Esophagus muscularis mucosa (tissue), 4 donors: ENCODE measurements at regions of chr9 and their contacts with region 1.

Region 1: DNA sequence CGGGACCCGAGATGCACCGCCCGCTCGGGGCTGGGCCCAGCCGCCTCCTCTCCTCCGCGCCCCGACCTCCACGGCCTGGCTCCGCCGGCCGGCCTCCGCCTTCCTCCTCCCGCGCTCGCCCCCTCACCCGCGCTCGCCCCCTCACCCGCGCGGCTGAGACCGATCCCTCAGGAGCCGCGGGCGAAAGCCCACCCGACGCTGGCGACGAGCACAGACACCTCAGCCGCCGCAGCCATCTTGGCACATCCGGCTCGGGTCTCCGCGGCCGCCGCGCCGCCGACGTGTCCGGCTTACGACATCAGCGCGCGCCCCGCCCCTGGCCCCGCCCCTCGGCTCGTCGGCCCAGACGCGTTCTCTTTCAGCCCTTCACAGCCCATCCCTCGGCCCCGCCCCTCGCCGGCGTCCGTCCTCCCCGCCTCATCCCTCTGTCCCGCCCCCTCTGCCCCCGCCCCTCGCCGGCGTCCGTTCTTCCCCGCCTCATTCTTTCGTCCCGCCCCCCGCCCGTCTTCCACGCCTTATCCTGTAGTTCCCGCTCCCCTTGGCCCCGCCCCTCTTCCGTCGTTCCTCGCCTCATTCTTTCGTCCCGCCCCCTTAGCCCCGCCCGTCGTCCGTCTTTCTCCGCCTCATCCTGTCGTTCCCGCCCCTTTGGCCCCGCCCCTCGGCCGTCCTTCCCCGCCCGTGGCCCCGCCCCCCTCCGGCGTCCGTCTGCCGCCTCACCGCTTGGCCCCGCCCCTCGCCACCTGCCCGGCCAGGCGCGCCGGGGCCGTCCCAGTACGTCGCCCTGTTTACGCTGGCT is at the start of gene SEC16A:
- DNase-seq: peak; percentile 100
- H3K4me3 ChIP-seq: peak within 1 kb of the TSS; percentile 67 to 99 (median 95)
- H3K27ac ChIP-seq: peak within 1 kb of the TSS; percentile 91 to 100 (median 98)
- H3K4me1 ChIP-seq: peaks cover 21 to 46% (median 40%) of the 10 kb centered on the region in 4 donors
- H3K27me3 ChIP-seq: no peaks in the 10 kb centered on the region
- CTCF ChIP-seq: no peak
- EP300 ChIP-seq: no peak
- POLR2A ChIP-seq: peak; percentile 94
- total RNA-seq, gene SEC16A: 43.2 to 62.3 (median 51.3) TPM

Region 2: GRCh38 chr9:136424750-136425362 is 58.1 kb before region 1 on chr9:
- intact Hi-C with region 1: no loop called
- DNase-seq: no peak
- H3K4me3 ChIP-seq: no peak overlapping the region
- H3K27ac ChIP-seq: no peak overlapping the region
- H3K4me1 ChIP-seq: no peaks in the 10 kb centered on the region
- H3K27me3 ChIP-seq: no peaks in the 10 kb centered on the region
- CTCF ChIP-seq: no peak
- EP300 ChIP-seq: no peak
- POLR2A ChIP-seq: no peak

Region 3: GRCh38 chr9:136527721-136528691 is 45.0 kb after region 1 on chr9:
- intact Hi-C with region 1: loop called (anchors 5 kb)
- DNase-seq: no peak
- H3K4me3 ChIP-seq: no peak overlapping the region
- H3K27ac ChIP-seq: peak overlapping the region; percentile 72 to 79 (median 76)
- H3K4me1 ChIP-seq: peaks cover 81 to 100% (median 98%) of the 10 kb centered on the region in 4 donors
- H3K27me3 ChIP-seq: no peaks in the 10 kb centered on the region
- CTCF ChIP-seq: no peak
- EP300 ChIP-seq: no peak
- POLR2A ChIP-seq: no peak

Region 4: DNA sequence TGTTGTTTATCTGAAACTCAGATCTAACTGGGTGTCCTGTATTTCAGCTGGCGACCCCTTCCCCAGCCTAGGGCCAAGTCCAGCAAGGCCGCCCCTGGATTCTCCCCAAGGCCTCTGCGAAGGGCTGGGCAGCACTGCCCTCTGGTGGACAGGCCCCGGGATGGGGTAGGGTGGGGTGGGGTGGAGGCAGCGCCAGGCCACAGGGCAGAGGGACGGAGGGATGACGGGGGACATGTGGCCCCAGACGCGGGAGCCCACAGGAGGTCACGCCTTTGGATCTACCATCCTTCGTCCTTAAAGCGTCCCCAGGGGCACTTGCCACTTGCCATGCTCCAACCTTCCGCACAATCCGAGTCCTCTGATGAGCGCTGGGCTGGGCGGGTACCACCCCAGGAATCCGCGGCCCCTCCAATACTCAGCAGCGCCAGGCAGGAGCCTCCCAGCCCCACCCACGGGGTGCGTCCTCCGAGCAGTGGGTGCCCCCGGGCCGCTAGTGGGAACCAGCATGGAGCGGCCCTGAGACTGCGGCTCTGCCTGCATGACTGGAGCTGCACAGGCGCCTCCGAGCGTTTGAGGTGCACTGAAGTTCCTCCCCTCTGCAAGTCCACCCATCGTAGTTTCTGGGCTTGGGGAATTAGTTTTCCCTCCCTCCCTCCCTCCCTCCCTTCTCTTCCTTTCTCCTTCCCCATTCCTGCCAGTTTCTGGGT is 211.4 kb after region 1 on chr9:
- intact Hi-C with region 1: loop called (anchors 10 kb)
- DNase-seq: no peak
- H3K4me3 ChIP-seq: no peak overlapping the region
- H3K27ac ChIP-seq: no peak overlapping the region
- H3K4me1 ChIP-seq: peaks cover 26 to 35% (median 29%) of the 10 kb centered on the region in 4 donors
- H3K27me3 ChIP-seq: peaks cover 0 to 20% (median 0%) of the 10 kb centered on the region in 4 donors
- CTCF ChIP-seq: peak; percentile 59 to 80 (median 60)
- EP300 ChIP-seq: no peak
- POLR2A ChIP-seq: no peak